ENCODE measurements at regions of chr19 and their contacts with region 1.

Region 1: DNA sequence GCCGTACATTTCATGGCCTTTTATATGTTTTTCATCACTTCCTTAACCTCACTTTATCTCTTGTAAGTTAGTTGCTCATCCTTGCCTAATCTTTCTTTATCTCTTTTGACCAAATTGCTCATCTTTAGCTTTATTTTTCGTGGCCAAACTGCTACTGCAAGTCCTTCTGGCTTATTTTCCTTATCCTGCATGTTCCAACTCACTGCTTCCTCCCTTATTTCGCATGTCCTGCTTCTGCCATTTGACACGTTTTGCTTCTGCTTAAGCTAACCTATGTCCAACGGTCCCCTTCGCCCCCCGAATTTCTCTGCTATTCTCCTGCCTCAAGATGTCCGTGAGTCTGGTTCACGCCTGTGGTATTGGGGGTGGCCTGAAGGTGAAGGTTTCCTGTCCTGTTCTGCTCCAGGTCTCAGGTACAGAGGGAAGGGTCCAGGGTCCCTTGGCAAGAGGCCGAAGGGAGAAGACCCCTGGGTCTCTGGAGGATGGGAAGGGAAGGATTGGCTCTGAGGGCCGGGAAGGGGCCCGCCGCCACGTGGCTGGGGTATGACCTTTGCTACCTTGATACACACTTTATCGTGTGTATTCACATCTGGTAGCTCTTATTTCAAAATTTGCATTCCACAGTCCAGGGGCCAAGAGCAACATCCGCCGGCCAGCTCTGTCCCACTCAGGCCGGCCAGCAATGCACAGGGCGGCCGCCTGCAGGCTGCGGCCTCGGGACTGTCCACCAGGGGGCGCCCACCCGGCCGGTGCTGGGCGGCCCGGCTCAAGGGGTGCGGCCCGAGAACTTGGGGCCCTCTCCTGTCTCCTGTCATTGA is 2.9 kb upstream of the C19orf85 start:
- DNase-seq: peak; percentile 71
- ATAC-seq: peak; percentile 89
- H3K4me3 Mint-ChIP-seq: no peak overlapping the region
- H3K27ac Mint-ChIP-seq: no peak overlapping the region
- H3K4me1 Mint-ChIP-seq: peaks cover 3% of the 10 kb centered on the region
- H3K27me3 Mint-ChIP-seq: no peaks in the 10 kb centered on the region

Region 2: GRCh38 chr19:55494172-55494761 is 26.8 kb after region 1 on chr19:
- CTCF ChIA-PET with region 1: interaction called, 16 read pairs
- POLR2A ChIA-PET with region 1: no interaction called
- DNase-seq: no peak
- ATAC-seq: peak; percentile 49
- H3K4me3 Mint-ChIP-seq: no peak overlapping the region
- H3K27ac Mint-ChIP-seq: peak overlapping the region; percentile 23
- H3K4me1 Mint-ChIP-seq: no peaks in the 10 kb centered on the region
- H3K27me3 Mint-ChIP-seq: no peaks in the 10 kb centered on the region